IMR-90 (cell line): ENCODE measurements at regions of chr3 and their contacts with region 1.

Region 1: GRCh38 chr3:58994746-58995330 is 55.0 kb downstream of the CFAP20DC start:
- DNase-seq: peak; percentile 79
- ATAC-seq: peak; percentile 30; the same call in 1 of the 2 replicates
- H3K4me3 ChIP-seq: no peak overlapping the region
- H3K27ac ChIP-seq: no peak overlapping the region
- H3K4me1 ChIP-seq: peaks cover 16% of the 10 kb centered on the region
- H3K27me3 ChIP-seq: no peaks in the 10 kb centered on the region
- CTCF ChIP-seq: peak; percentile 85
- POLR2A ChIP-seq: no peak
- RAD21 ChIP-seq: peak; percentile 82

Region 2: GRCh38 chr3:58568572-58569286 is 426.1 kb before region 1 on chr3:
- CTCF ChIA-PET with region 1: no interaction called
- POLR2A ChIA-PET with region 1: no interaction called
- dilution Hi-C with region 1: no loop called
- in situ Hi-C with region 1: loop called (anchors 25 kb)
- intact Hi-C with region 1: no loop called
- DNase-seq: peak; percentile 63
- ATAC-seq: peak; percentile 73
- H3K4me3 ChIP-seq: no peak overlapping the region
- H3K27ac ChIP-seq: no peak overlapping the region
- H3K4me1 ChIP-seq: peaks cover 2% of the 10 kb centered on the region; the same call in 1 of the 2 replicates
- H3K27me3 ChIP-seq: no peaks in the 10 kb centered on the region
- CTCF ChIP-seq: peak; percentile 88
- POLR2A ChIP-seq: no peak
- RAD21 ChIP-seq: peak; percentile 73

Region 3: DNA sequence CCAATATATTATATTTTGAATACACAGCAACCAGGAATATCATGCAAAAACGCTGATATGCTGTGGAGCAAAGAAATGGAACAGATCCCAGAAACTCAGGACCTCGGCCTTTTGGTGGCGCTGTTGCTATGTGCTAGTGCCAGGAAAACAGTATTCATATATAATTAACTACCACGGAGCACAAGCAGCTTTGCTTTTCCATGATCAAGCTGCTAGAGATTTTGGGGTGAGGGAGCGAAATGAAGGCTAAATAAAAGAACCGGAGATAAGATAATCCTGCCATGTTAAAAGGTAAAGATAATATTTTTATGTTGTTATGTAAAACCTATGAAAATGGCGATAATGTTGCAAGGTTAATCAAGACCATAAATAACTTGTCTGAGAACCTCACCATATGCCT is 170.6 kb before region 1 on chr3:
- CTCF ChIA-PET with region 1: interaction called, 3 read pairs
- POLR2A ChIA-PET with region 1: no interaction called
- dilution Hi-C with region 1: no loop called
- in situ Hi-C with region 1: no loop called
- intact Hi-C with region 1: loop called (anchors 2 kb)
- DNase-seq: peak; percentile 73
- ATAC-seq: peak; percentile 89
- H3K4me3 ChIP-seq: no peak overlapping the region
- H3K27ac ChIP-seq: no peak overlapping the region
- H3K4me1 ChIP-seq: no peaks in the 10 kb centered on the region
- H3K27me3 ChIP-seq: no peaks in the 10 kb centered on the region
- CTCF ChIP-seq: peak; percentile 89
- POLR2A ChIP-seq: no peak
- RAD21 ChIP-seq: peak; percentile 93

Region 4: DNA sequence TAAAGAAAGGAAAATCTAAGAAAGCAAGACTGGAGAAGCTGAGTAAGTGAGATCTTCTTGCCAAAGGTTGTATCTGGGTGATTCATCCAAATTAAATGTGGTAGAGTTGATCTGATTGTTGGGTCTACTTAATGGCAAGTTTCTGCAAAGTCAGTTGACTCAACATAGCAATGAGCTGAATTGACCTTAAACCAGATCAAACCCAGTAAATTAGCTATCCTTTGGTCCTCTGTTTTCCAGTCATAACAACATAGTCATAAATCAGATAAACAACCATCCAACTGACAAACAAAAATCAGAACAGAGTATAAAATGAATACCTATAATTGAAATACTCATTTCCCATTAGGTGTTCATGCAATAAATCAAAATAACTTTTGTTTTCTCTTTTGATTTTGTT is 197.6 kb after region 1 on chr3:
- CTCF ChIA-PET with region 1: no interaction called
- POLR2A ChIA-PET with region 1: no interaction called
- dilution Hi-C with region 1: no loop called
- in situ Hi-C with region 1: no loop called
- intact Hi-C with region 1: loop called (anchors 5 kb)
- DNase-seq: peak; percentile 87
- ATAC-seq: peak; percentile 76
- H3K4me3 ChIP-seq: no peak overlapping the region
- H3K27ac ChIP-seq: no peak overlapping the region
- H3K4me1 ChIP-seq: peaks cover 2% of the 10 kb centered on the region; the same call in 1 of the 2 replicates
- H3K27me3 ChIP-seq: no peaks in the 10 kb centered on the region
- CTCF ChIP-seq: no peak
- POLR2A ChIP-seq: no peak
- RAD21 ChIP-seq: no peak

Region 5: DNA sequence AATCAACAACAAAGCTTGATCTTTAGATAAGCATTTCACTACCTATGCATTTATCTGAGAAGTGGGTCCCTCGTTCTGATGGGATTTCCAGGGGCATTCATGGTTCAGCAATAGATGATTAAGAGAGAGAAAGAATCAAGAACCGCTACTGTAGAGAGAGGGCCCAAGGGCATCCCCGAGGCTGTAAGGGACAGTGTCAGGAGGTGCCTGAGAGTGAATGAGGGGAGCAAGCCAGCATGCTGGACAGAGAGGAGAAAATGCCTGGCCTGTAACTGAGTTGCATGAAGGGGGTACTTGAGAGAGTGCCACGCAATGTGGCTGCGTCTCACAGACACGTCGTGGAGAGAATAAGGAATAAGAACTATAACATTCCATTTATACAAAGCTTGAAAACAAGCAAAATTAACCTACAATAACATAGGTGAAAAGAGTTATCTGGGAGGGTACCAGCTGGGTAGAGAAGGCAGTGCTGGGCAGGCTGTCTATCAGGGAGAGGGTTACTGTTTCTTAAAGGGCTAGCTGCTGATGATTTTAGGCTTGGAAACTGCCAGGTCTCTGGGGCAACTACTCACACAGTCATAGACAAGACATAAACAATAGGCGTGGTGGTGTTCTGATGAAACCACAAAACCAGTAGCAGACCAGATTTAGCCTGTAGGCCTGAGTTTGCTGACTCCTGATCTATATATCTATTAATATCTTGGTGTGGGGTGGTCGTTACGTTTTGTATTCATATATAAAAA is 429.6 kb after region 1 on chr3:
- CTCF ChIA-PET with region 1: interaction called, 5 read pairs
- POLR2A ChIA-PET with region 1: no interaction called
- dilution Hi-C with region 1: no loop called
- in situ Hi-C with region 1: no loop called
- intact Hi-C with region 1: loop called (anchors 10 kb)
- DNase-seq: peak; percentile 93
- ATAC-seq: peak; percentile 51
- H3K4me3 ChIP-seq: no peak overlapping the region
- H3K27ac ChIP-seq: peak overlapping the region; percentile 19
- H3K4me1 ChIP-seq: peaks cover 23% of the 10 kb centered on the region
- H3K27me3 ChIP-seq: no peaks in the 10 kb centered on the region; the same call in 1 of the 2 replicates
- CTCF ChIP-seq: no peak
- POLR2A ChIP-seq: no peak
- RAD21 ChIP-seq: no peak

Region 6: DNA sequence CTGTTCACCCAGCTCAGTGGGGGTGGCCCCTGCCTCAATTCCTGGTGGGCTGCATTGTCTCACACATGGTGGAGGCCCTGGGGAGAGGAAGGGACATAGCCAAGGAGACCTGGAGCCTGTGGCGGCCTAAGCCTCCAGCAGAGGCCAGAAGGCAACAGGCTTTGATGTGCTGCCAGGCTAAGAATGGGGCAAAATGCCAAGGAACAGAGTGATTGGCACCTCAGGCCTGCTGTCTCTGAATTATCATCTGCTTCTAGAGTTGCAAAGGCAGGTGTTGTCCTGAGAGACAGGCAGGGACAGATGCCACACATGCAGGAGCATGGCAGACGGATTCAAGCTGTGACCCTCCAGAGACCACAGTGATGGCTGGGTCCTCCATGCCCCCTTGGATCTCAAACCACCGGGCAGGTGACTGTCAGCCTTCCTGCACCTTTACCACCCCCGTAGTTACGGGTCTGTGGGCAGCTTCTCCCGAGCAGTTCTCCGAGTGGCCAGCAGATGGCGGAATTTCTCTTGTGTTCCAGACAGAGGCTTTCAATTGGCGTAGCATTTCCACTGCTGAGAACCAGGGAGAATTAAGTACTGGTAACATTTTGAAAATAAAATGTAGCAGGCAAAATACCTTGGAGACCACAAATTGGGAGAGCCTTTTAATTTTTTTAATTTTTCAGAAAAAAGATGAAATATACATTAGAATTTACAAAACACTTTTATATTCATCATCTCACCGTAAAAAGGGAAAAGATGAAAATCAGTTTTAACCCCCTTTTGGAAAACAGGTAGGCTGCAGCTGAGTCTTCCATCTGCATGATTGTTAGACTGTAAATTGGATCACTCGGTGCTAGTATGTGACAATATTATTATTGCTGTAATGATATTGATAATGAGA is 580.5 kb after region 1 on chr3:
- CTCF ChIA-PET with region 1: no interaction called
- POLR2A ChIA-PET with region 1: no interaction called
- dilution Hi-C with region 1: no loop called
- in situ Hi-C with region 1: loop called (anchors 25 kb)
- intact Hi-C with region 1: loop called (anchors 2 kb)
- DNase-seq: peak; percentile 69
- ATAC-seq: peak; percentile 88
- H3K4me3 ChIP-seq: no peak overlapping the region
- H3K27ac ChIP-seq: 0 out of 2 replicates have a peak overlapping the region, but pooled peaks have one; percentile 7
- H3K4me1 ChIP-seq: peaks cover 9% of the 10 kb centered on the region
- H3K27me3 ChIP-seq: no peaks in the 10 kb centered on the region
- CTCF ChIP-seq: peak; percentile 88
- POLR2A ChIP-seq: no peak
- RAD21 ChIP-seq: peak; percentile 91

Region 7: DNA sequence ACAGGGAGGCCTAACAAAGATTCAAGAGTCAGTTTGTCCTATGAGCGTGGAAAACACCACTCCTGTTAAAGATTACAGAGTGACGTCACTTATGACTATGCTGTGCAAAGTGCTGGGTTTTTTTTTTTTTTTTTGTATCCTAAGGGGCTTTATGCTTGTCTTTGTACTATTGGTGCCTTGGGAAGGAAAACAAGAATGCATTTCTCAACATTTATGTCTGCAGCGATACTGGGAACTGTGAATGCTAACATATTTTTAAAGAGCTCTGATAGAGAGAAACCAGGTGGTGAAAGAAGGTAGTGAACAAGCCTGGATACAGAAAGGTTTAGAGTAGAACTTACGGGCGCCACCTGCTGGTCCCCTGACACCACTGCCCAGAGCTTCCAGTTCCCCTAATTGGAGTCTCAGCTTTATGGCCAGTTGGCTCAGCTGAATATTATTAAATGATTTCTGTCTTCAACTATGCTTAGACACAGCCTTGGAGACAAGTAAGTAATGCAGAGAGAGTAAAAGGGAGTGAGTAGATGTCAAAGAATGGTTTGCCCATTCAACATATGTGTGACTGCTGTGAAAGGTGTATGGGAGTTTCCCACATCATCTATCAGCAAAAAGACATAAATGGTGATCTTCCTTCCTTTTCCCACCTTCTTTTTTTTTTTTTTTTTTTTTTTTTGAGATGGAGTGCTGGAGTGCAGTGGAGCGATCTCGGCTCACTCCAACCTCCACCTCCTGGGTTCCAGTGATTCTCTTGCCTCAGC is 862.9 kb after region 1 on chr3:
- CTCF ChIA-PET with region 1: interaction called, 3 read pairs
- POLR2A ChIA-PET with region 1: no interaction called
- dilution Hi-C with region 1: no loop called
- in situ Hi-C with region 1: no loop called
- intact Hi-C with region 1: loop called (anchors 2 kb)
- DNase-seq: peak; percentile 81
- ATAC-seq: peak; percentile 99
- H3K4me3 ChIP-seq: no peak overlapping the region
- H3K27ac ChIP-seq: no peak overlapping the region
- H3K4me1 ChIP-seq: no peaks in the 10 kb centered on the region
- H3K27me3 ChIP-seq: no peaks in the 10 kb centered on the region
- CTCF ChIP-seq: peak; percentile 96
- POLR2A ChIP-seq: no peak
- RAD21 ChIP-seq: peak; percentile 90